Endothelial cell of umbilical vein (primary cell): ENCODE measurements at regions of chr16 and their contacts with region 1.

Region 1: GRCh38 chr16:11851294-11852091 is at the start of gene RSL1D1:
- DNase-seq: peak; percentile 98
- H3K4me3 ChIP-seq: peak within 1 kb of the TSS; percentile 51 to 95 (median 72)
- H3K27ac ChIP-seq: peak within 1 kb of the TSS; percentile 47
- H3K4me1 ChIP-seq: peaks cover 11% of the 10 kb centered on the region
- H3K27me3 ChIP-seq: no peaks in the 10 kb centered on the region
- CTCF ChIP-seq: no peak
- POLR2A ChIP-seq: peak; percentile 98
- total RNA-seq, gene RSL1D1: 127 and 132 TPM in 2 replicates

Region 2: GRCh38 chr16:11797166-11797956 is 54.1 kb before region 1 on chr16 and contains the start of gene ZC3H7A:
- CTCF ChIA-PET with region 1: interaction called, 5 read pairs
- POLR2A ChIA-PET with region 1: no interaction called
- dilution Hi-C with region 1: no loop called
- intact Hi-C with region 1: loop called (anchors 1 kb)
- DNase-seq: peak; percentile 98
- H3K4me3 ChIP-seq: peak within 1 kb of the TSS; percentile 82 to 93 (median 93)
- H3K27ac ChIP-seq: peak within 1 kb of the TSS; percentile 87
- H3K4me1 ChIP-seq: peaks cover 32% of the 10 kb centered on the region
- H3K27me3 ChIP-seq: no peaks in the 10 kb centered on the region
- CTCF ChIP-seq: peak; percentile 49 to 88
- POLR2A ChIP-seq: peak; percentile 98
- total RNA-seq, gene ZC3H7A: 73.9 and 78.0 TPM in 2 replicates

Region 3: DNA sequence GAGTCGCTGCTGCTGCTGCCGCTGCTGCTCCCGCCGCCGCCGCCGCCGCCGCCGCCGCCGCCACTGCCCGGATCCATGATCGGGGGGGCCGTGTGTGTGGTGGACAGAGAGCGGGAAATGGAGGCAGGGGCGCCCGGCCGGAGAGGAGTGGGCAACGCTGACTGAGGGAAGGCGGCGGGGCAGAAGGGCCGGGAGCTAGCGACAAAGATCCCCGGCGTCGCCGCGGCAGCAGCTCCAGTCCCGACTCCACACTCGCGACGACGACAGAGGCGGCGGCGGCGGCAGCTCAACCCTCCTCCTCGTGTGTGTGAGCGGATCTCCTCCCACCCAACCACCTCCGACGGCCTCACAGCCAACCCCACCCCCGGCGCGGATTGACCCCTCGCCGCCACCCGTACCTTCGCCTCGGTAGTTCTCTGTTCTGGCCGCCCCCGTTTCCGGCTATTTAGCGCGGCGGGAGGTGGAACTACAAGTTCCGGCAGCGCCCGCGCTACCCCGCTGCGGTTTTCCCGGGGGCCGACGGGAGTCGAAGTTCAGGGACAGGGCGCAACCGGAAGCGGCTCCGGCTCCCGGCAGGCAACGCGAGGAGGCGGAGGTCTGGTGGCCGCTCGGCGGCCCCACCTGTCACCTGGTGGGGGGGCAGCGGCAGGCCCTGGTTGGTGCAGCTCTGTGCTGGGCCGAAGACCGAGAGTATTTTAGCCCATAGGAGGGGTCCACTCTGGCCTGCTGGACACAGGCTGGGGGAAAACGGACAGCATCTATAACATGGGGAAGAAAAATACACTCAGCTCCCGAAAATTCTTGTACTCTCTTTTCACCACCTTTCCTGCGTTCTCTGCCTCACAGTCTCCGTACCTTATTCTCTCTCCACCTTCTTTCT is 64.4 kb after region 1 on chr16 and contains the start of gene GSPT1:
- CTCF ChIA-PET with region 1: no interaction called
- POLR2A ChIA-PET with region 1: no interaction called
- dilution Hi-C with region 1: no loop called
- intact Hi-C with region 1: loop called (anchors 1 kb)
- DNase-seq: peak; percentile 99
- H3K4me3 ChIP-seq: peak within 1 kb of the TSS; percentile 68 to 96 (median 77)
- H3K27ac ChIP-seq: peak within 1 kb of the TSS; percentile 76
- H3K4me1 ChIP-seq: peaks cover 24% of the 10 kb centered on the region
- H3K27me3 ChIP-seq: peaks cover 0 to 2% of the 10 kb centered on the region in 2 experiments
- CTCF ChIP-seq: peak in 1 of 2 donors; percentile 9
- POLR2A ChIP-seq: peak; percentile 76
- total RNA-seq, gene GSPT1: 137 and 152 TPM in 2 replicates

Region 4: DNA sequence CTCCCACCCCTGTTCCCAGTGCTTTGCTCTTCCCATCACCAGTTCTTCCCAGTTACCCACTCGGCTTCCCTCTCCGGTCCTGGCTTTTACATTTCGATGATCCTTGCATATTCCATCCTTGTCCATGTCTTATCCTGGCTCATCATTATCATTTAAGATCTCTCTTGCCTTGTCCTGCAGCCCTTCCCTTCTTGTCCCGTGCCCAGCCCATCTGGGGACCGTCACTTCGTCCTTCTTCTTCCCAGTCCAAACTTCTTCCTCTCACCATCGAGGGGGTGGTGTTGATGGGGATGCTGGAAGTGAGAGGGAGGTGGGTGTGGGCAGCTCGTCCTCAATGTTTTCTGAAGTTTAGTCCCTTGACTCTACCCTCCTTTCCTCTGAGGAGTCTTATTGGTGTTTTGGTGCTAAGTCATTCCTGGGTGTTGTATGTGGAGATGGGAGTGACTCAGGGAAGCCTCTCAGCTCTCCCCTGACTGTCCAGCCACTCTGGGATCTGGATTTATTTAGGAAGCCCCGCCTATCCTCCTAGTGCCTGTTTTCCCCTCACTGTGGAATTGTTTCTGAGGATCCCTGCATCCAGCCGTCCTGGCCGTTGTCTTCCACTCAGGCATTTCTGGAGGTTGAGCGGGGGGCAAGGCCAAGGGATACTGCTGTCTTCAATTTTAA is 126.0 kb after region 1 on chr16:
- CTCF ChIA-PET with region 1: no interaction called
- POLR2A ChIA-PET with region 1: no interaction called
- dilution Hi-C with region 1: no loop called
- intact Hi-C with region 1: loop called (anchors 1 kb)
- DNase-seq: peak; percentile 12
- H3K4me3 ChIP-seq: peak overlapping the region; percentile 72 to 97 (median 74)
- H3K27ac ChIP-seq: no peak overlapping the region
- H3K4me1 ChIP-seq: peaks cover 14% of the 10 kb centered on the region
- H3K27me3 ChIP-seq: no peaks in the 10 kb centered on the region
- CTCF ChIP-seq: no peak
- POLR2A ChIP-seq: no peak

Region 5: DNA sequence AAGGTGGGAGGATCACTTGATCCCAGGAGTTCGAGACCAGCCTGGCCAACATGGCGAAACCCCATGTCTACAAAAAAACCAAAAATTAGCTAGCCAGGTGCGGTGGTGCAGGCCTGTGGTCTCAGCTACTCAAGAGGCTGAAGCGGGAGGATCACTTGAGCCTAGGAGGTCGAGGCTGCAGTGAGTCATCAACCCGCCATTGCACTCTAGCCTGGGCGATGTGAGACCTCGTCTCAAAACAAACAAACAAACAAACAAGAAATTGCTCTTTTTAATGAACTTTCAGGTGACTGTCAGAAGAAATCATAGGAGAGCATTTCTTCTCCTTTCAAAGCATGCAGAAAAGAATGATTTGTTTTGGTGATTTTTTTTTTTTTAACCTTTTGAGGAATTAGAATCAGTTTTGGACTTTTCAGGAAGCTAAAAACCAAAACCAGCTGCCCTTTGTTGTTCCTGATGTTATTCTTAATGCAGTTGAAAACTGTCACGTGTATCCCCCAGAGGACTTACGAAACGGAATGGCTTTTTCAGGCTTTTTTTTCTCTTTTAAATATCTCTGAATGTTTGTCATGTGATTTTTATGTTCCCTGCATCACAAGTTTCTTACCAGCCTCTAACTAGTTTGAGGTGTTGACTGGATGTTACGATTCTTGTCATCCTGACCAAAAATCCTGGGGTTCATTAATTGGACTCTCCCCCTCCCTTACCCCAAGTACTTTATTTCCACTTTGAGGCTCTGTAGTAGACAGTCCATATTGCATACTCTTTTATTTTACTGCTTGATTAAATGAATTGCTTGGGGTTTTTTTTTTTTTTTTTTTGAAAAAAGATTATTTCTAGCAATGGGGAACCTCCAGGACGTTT is 159.1 kb after region 1 on chr16:
- CTCF ChIA-PET with region 1: no interaction called
- POLR2A ChIA-PET with region 1: no interaction called
- dilution Hi-C with region 1: no loop called
- intact Hi-C with region 1: no loop called
- DNase-seq: no peak
- H3K4me3 ChIP-seq: no peak overlapping the region
- H3K27ac ChIP-seq: no peak overlapping the region
- H3K4me1 ChIP-seq: no peaks in the 10 kb centered on the region
- H3K27me3 ChIP-seq: no peaks in the 10 kb centered on the region
- CTCF ChIP-seq: no peak
- POLR2A ChIP-seq: no peak